HepG2 (cell line): ENCODE measurements at regions of chr4 and their contacts with region 1.

Region 1: DNA sequence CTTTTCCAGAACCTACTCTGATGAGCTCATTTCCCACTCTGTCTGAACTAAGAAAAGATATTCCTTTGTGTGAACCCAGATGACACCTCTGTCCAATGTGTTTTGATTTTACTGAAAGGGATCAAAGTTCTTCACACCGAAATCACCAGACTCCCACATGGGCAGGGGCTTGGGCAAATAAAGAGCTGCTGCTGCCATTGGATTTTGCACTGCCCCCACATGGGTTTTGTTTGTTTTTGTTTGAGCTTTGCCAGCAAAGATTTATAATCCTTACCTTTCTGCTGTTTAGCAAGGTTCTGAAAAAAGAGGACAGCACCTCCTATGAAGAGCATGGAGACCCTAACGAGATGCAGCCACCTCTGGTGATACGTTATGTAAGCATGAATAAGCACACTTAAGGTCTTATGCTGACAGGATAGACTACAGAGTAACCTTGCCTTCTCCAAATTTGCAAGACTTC is 44.3 kb downstream of the HSD17B13 start:
- DNase-seq: peak; percentile 94
- ATAC-seq: peak; percentile 98
- H3K4me3 ChIP-seq: peak overlapping the region in 1 of 3 experiments; percentile 39; a peak in 1 of 6 replicates
- H3K27ac ChIP-seq: peak overlapping the region; percentile 89
- H3K4me1 ChIP-seq: peaks cover 48% of the 10 kb centered on the region
- H3K27me3 ChIP-seq: no peaks in the 10 kb centered on the region
- CTCF ChIP-seq: 0 out of 2 replicates have a peak, but pooled peaks have one; percentile 25
- EP300 ChIP-seq: peak in 1 of 2 experiments; percentile 96; a peak in 2 of 4 replicates
- POLR2A ChIP-seq: no peak
- RAD21 ChIP-seq: no peak

Region 2: GRCh38 chr4:87313756-87314155 is 35.4 kb after region 1 on chr4:
- CTCF ChIA-PET with region 1: no interaction called
- POLR2A ChIA-PET with region 1: no interaction called
- in situ Hi-C with region 1: no loop called
- intact Hi-C with region 1: loop called (anchors 1 kb)
- DNase-seq: no peak
- ATAC-seq: no peak
- H3K4me3 ChIP-seq: no peak overlapping the region
- H3K27ac ChIP-seq: no peak overlapping the region
- H3K4me1 ChIP-seq: no peaks in the 10 kb centered on the region
- H3K27me3 ChIP-seq: no peaks in the 10 kb centered on the region
- CTCF ChIP-seq: no peak
- EP300 ChIP-seq: no peak
- POLR2A ChIP-seq: no peak
- RAD21 ChIP-seq: no peak

Region 3: DNA sequence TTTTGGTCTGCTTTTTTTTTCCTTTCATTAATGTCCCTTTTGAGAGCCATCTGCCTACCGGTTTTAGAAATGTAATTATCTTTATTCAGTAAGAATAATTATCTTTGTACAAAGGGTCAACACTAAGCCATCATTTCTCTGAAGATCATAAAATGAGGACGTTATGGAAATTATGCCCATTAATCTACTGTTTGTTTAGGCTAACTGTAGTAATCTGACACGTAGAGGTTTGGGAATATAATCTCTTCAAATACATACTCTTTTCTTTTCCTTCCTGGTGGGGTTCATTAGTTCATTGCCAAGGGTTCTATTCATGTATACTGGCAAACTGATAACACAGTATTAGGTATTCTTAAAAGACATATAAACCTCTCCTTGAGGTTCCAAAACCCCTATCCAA is 48.1 kb after region 1 on chr4:
- CTCF ChIA-PET with region 1: no interaction called
- POLR2A ChIA-PET with region 1: no interaction called
- in situ Hi-C with region 1: no loop called
- intact Hi-C with region 1: loop called (anchors 1 kb)
- DNase-seq: no peak
- ATAC-seq: no peak
- H3K4me3 ChIP-seq: no peak overlapping the region
- H3K27ac ChIP-seq: no peak overlapping the region
- H3K4me1 ChIP-seq: no peaks in the 10 kb centered on the region
- H3K27me3 ChIP-seq: no peaks in the 10 kb centered on the region
- CTCF ChIP-seq: no peak
- EP300 ChIP-seq: no peak
- POLR2A ChIP-seq: no peak
- RAD21 ChIP-seq: no peak

Region 4: GRCh38 chr4:87339440-87339839 is 61.1 kb after region 1 on chr4:
- CTCF ChIA-PET with region 1: no interaction called
- POLR2A ChIA-PET with region 1: no interaction called
- in situ Hi-C with region 1: no loop called
- intact Hi-C with region 1: no loop called
- DNase-seq: no peak
- ATAC-seq: no peak
- H3K4me3 ChIP-seq: no peak overlapping the region
- H3K27ac ChIP-seq: no peak overlapping the region
- H3K4me1 ChIP-seq: no peaks in the 10 kb centered on the region
- H3K27me3 ChIP-seq: no peaks in the 10 kb centered on the region
- CTCF ChIP-seq: no peak
- EP300 ChIP-seq: no peak
- POLR2A ChIP-seq: no peak
- RAD21 ChIP-seq: no peak